Colonic mucosa (tissue), 4 donors: ENCODE measurements at regions of chr5 and their contacts with region 1.

Region 1: GRCh38 chr5:135191084-135191826 is 157.2 kb upstream of the PITX1 start:
- DNase-seq: peak; percentile 84
- H3K4me3 ChIP-seq: peak overlapping the region; percentile 36
- H3K27ac ChIP-seq: peak overlapping the region; percentile 9
- H3K4me1 ChIP-seq: no peaks in the 10 kb centered on the region
- H3K27me3 ChIP-seq: peaks cover 17% of the 10 kb centered on the region
- CTCF ChIP-seq: peak; percentile 90

Region 2: GRCh38 chr5:134917070-134917815 is 274.0 kb before region 1 on chr5:
- intact Hi-C with region 1: loop called (anchors 5 kb)
- DNase-seq: no peak
- H3K4me3 ChIP-seq: no peak overlapping the region
- H3K27ac ChIP-seq: no peak overlapping the region
- H3K4me1 ChIP-seq: no peaks in the 10 kb centered on the region
- H3K27me3 ChIP-seq: no peaks in the 10 kb centered on the region
- CTCF ChIP-seq: peak; percentile 35